Activated T-helper 1 cell treated with anti-CD3 and anti-CD28 coated beads, Interleukin-12 subunit alpha, Interleukin-12 subunit beta, Interleukin-2, Interleukin-4 antibody, amounts not matched to agents 30 ng/mL and 10 ng/mL and 1 ng/mL, durations not matched to agents 14 hours and 24 hours and 36 hours (primary cell): ENCODE measurements at regions of chr1 and their contacts with region 1.

Region 1: GRCh38 chr1:219670426-219671149 is 57.7 kb upstream of the ZC3H11B start:
- DNase-seq: no peak
- H3K4me3 Mint-ChIP-seq: no peak overlapping the region
- H3K27ac Mint-ChIP-seq: no peak overlapping the region
- H3K4me1 Mint-ChIP-seq: no peaks in the 10 kb centered on the region
- H3K27me3 Mint-ChIP-seq: no peaks in the 10 kb centered on the region

Region 2: DNA sequence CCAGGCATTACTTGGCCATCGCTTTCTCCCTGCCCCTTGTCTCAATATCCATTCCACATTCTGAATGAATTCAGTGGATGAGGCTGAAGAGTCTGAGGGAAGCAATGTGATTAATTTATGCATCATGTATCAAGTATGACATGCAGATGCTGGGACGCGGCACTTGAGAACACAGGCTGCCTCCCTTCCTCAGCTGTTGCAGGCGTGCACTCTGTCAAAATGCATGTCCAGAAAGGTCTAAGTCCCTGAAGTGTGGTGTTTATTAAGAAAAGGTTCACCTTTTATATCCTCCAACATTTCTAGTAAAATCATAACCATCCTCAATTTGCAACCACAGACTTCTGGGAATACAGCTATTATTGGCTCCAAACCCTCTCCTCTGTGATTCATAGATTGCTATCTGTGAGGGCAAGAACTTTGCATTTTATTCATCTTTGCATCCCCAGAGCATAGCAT is 624.3 kb after region 1 on chr1:
- intact Hi-C with region 1: loop called (anchors 5 kb)
- DNase-seq: no peak
- H3K4me3 Mint-ChIP-seq: no peak overlapping the region
- H3K27ac Mint-ChIP-seq: no peak overlapping the region
- H3K4me1 Mint-ChIP-seq: no peaks in the 10 kb centered on the region
- H3K27me3 Mint-ChIP-seq: peaks cover 2% of the 10 kb centered on the region